WTC11 (cell line): ENCODE measurements at regions of chr20 and their contacts with region 1.

Region 1: DNA sequence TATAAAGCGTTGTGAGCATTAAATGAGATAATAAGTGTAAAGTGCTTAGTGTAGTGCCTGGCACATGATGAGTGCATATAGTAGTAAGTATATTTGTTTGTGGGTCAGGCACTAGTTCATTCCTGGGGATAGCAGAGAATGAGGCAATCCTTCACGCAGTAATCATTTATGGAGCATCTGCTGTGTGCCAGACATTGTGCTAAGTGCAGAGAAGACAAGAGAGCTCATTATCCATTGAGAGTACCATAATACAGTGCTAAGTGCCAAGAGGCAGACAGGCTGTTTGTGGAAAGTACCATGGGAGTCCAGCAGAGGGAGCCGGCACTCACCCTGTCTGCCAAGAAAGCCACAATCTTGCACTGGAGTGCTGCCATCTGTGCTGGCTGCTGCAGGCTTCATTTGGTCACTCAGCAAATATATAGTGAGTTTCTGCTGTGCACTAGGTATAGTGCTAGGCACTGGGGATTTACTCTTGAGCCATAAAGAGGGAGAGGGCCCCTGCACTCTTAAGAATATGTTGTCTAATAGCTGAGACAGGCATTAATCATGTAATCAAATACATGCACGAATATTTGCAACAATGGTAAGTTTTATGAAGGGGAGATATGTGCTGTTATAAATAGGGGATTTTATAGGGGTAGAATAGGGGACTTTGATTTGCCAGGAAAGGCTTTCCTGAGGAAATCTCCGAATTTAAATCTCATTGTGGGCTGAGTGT is 12.9 kb upstream of the MROH8 start:
- DNase-seq: peak; percentile 80
- ATAC-seq: peak; percentile 87
- H3K4me3 Mint-ChIP-seq: no peak overlapping the region
- H3K27ac Mint-ChIP-seq: peak overlapping the region; percentile 95
- H3K4me1 Mint-ChIP-seq: peaks cover 29% of the 10 kb centered on the region
- H3K27me3 Mint-ChIP-seq: no peaks in the 10 kb centered on the region
- CTCF ChIP-seq: peak; percentile 77

Region 2: GRCh38 chr20:36773597-36774390 is 418.5 kb before region 1 on chr20 and contains the start of gene DSN1:
- CTCF ChIA-PET with region 1: no interaction called
- POLR2A ChIA-PET with region 1: no interaction called
- DNase-seq: peak; percentile 99
- ATAC-seq: peak; percentile 80
- H3K4me3 Mint-ChIP-seq: peak within 1 kb of the TSS; percentile 90
- H3K27ac Mint-ChIP-seq: peak within 1 kb of the TSS; percentile 100
- H3K4me1 Mint-ChIP-seq: peaks cover 7% of the 10 kb centered on the region
- H3K27me3 Mint-ChIP-seq: peaks cover 2% of the 10 kb centered on the region; the same call in 1 of the 2 replicates
- CTCF ChIP-seq: no peak
- total RNA-seq, gene DSN1: 26.0 to 27.0 TPM (median 26.9 TPM) in 3 replicates

Region 3: DNA sequence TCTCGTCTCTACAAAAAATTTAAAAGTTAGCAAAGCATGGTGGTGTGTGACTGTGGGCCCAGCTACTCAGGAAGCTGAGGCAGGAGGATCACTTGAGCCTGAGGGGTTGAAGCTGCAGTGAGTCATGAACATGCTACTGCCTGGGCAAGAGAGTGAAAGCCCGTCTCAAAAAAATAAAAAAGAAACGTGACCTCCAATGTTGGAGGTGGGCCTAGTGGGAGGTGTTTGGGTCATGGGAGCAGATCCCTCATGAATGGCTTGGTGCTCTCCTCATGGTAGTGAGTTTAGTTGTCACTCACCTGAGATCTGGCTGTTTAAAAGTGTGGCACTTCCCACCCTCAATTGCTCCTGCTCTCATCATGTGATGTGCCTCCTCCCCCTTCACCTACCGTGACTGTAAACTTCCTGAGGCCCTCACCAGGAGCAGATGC is 120.8 kb before region 1 on chr20:
- CTCF ChIA-PET with region 1: no interaction called
- POLR2A ChIA-PET with region 1: no interaction called
- DNase-seq: no peak
- ATAC-seq: no peak
- H3K4me3 Mint-ChIP-seq: no peak overlapping the region
- H3K27ac Mint-ChIP-seq: peak overlapping the region; percentile 76
- H3K4me1 Mint-ChIP-seq: peaks cover 3% of the 10 kb centered on the region; the same call in 1 of the 2 replicates
- H3K27me3 Mint-ChIP-seq: no peaks in the 10 kb centered on the region
- CTCF ChIP-seq: no peak

Region 4: GRCh38 chr20:37178839-37179670 is 13.2 kb before region 1 on chr20 and contains the starts of genes MROH8 and RPN2:
- CTCF ChIA-PET with region 1: interaction called, 43 read pairs
- POLR2A ChIA-PET with region 1: interaction called, 5 read pairs
- DNase-seq: peak; percentile 98
- ATAC-seq: peak; percentile 98
- H3K4me3 Mint-ChIP-seq: peak within 1 kb of the TSS; percentile 81
- H3K27ac Mint-ChIP-seq: peak within 1 kb of the TSS; percentile 98
- H3K4me1 Mint-ChIP-seq: peaks cover 14% of the 10 kb centered on the region
- H3K27me3 Mint-ChIP-seq: no peaks in the 10 kb centered on the region; the same call in 1 of the 2 replicates
- CTCF ChIP-seq: no peak
- total RNA-seq, gene MROH8: 0.50 to 0.92 TPM (median 0.89 TPM) in 3 replicates
- total RNA-seq, gene RPN2: 205 to 233 TPM (median 227 TPM) in 3 replicates

Region 5: DNA sequence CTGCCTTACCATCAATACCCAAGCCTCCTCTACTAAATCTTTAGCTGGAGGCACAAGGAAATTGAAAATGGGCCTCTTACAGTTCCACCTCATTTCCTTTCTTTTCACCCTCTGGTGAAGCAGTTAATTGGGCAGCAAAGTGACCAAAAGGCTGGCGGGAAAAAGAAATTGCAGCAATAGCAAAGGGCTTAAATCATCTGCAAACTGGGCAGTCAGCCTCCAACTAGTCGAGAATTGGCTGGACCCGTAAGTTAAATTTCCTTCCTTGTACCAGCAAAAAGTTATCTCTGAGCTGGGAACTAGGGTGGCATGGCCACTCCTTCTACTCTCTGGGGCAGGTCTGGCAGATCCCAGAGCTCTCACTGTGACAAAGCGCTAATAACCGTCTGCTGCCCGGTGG is 35.8 kb after region 1 on chr20:
- CTCF ChIA-PET with region 1: interaction called, 23 read pairs
- POLR2A ChIA-PET with region 1: no interaction called
- DNase-seq: no peak
- ATAC-seq: no peak
- H3K4me3 Mint-ChIP-seq: no peak overlapping the region
- H3K27ac Mint-ChIP-seq: peak overlapping the region; percentile 89
- H3K4me1 Mint-ChIP-seq: peaks cover 47% of the 10 kb centered on the region
- H3K27me3 Mint-ChIP-seq: no peaks in the 10 kb centered on the region
- CTCF ChIP-seq: no peak

Region 6: DNA sequence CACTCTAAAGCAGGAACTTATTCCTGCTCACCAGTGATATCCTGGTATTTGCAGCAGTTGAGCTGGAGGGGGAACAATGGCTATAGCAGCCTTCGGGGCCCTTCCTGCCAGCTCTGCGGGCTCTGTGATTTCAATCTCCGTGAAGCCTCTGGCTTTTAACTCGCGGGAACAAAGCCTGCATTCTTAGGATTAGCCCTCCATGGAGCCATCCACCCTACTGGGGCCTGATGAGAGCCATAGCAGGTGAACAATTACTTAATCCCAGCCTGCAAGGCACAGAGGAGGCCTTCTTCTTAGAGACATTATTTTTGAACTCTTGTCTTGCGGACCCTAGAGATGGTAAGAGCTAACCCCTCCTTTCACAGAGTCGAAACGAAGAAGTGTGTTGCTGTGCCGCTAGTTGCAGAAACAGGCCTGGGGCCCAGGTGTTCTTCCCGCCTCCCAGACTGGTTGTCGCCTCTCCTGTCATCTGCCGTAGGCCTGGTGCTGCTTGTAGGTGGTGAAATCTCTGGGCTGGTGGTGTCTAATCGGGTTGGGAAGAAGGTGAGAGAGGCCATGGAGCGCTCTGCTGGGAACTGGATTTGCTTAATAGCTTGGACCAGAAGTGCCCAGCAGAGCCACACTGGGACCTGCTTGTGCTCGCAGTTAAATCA is 59.7 kb after region 1 on chr20:
- CTCF ChIA-PET with region 1: interaction called, 15 read pairs
- POLR2A ChIA-PET with region 1: no interaction called
- DNase-seq: no peak
- ATAC-seq: peak; percentile 77
- H3K4me3 Mint-ChIP-seq: no peak overlapping the region
- H3K27ac Mint-ChIP-seq: peak overlapping the region; percentile 86
- H3K4me1 Mint-ChIP-seq: peaks cover 14% of the 10 kb centered on the region
- H3K27me3 Mint-ChIP-seq: no peaks in the 10 kb centered on the region
- CTCF ChIP-seq: no peak

Region 7: DNA sequence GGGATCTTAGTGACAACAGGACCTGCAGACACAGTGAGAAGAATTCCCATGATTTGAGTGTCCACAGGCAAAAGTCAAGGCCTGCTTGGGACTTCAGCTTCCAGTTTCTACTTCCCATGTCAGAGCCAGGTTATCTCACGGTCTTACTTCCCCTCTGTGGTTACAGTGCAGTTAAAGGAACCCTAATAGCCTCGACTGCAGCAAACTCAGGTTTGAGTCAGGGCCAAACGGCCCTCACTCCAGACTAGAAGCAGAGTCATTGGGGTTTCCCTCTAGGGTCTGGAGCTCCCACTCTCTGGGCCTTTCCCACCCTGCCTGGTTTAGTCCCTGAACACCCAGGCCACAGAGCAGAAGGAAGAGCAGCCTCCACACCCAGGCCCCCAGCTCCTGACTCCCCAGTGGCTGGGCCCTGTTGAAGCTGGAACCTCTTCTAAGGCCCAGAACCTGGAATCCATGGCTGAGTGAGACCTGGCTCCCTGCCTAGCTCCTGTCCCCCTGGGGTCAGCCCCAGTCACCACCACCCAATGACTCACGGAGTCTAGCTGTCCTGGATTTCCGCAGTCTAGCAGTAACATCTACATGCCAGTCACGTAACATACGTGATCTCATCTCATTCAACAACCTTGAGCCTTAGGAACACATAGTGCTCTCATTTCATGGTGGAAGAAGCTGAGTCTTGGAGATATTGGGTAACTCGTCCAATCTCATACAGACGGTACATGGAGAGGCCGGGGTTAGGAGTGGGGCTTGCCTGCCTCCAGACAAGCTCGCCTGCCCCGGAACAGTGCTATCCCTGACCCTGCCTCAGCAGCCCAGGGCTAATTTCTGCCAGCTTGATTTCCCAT is 78.5 kb after region 1 on chr20:
- CTCF ChIA-PET with region 1: interaction called, 11 read pairs
- POLR2A ChIA-PET with region 1: no interaction called
- DNase-seq: no peak
- ATAC-seq: no peak
- H3K4me3 Mint-ChIP-seq: no peak overlapping the region
- H3K27ac Mint-ChIP-seq: no peak overlapping the region
- H3K4me1 Mint-ChIP-seq: peaks cover 39% of the 10 kb centered on the region
- H3K27me3 Mint-ChIP-seq: no peaks in the 10 kb centered on the region; the same call in 1 of the 2 replicates
- CTCF ChIP-seq: no peak

Region 8: GRCh38 chr20:37295001-37295400 is 102.7 kb after region 1 on chr20:
- CTCF ChIA-PET with region 1: no interaction called
- POLR2A ChIA-PET with region 1: no interaction called
- DNase-seq: no peak
- ATAC-seq: no peak
- H3K4me3 Mint-ChIP-seq: no peak overlapping the region
- H3K27ac Mint-ChIP-seq: peak overlapping the region; percentile 45
- H3K4me1 Mint-ChIP-seq: peaks cover 18% of the 10 kb centered on the region
- H3K27me3 Mint-ChIP-seq: no peaks in the 10 kb centered on the region
- CTCF ChIP-seq: no peak